ENCODE measurements at regions of chr17 and their contacts with region 1.

Region 1: DNA sequence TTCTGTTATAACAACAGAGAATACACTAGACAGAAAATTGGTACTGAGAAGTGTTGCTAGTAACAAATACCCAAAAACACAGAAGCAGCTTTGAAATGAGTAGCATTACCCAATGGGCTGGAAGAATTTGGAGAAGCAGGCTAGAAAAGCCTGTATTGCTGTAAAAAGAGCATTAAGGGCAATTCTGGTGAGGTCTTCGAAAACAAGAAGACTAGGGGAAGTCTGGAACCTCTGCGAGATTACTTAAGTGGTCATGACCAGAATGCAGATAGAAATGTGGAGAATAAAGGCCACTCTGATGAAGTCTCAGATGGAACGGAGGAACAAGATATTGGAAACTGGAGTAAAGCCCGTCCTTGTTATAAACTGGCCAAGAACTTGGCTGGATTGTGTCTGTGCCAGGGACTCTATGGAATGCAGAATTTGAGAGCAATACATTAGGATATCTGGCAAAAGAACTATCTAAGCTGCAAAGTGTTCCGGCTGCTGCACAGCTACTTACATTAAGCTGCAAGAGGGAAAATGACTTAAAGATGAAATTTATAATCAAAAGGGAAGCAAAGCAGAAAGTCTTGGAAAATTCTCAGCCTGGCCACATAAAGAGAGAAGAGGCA is 44.9 kb upstream of the PEMT start:
- DNase-seq: peak in 1 of 5 donors; percentile 5
- H3K4me3 ChIP-seq: no peak overlapping the region
- H3K27ac ChIP-seq: no peak overlapping the region
- H3K4me1 ChIP-seq: no peaks in the 10 kb centered on the region
- H3K27me3 ChIP-seq: no peaks in the 10 kb centered on the region
- CTCF ChIP-seq: no peak

Region 2: DNA sequence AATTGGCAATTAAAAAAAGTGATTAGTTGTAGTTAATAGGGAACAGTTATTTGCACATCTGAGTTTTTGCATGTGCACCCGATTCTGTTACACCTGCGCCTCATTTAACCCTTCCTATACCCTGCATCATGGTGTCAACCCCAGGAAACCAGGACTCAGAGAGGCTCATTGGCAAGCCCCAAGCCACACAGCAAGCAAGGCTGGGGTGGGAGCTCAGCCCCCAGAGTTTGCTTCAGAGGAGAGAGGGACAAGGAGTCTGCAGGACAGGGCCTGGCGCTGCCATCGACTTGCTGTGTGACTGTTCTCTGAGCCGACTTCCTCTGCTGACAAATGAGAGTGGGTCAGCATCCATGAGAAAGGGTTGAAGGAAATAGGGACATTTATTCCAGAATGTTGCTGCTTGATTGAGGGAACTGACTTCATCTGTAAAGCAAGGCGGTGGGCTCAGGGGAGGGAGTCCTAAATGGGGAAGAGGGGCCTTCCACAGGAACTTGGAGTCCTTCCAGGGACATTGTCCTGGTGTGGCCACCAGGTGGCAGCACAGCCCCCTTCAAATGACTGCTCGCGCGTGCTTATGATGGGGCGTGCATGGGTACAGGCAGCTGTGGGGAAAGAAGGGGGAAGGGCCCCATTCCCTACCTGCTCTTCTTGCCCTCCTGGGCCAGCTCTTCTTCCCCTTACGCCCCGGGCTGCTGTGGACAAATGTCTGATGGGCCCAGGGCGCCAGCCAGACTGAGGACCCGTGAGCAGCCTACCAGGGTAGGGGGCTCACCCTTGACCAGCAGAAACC is 281.6 kb before region 1 on chr17:
- intact Hi-C with region 1: loop called (anchors 5 kb)
- DNase-seq: peak in 4 of 5 donors; percentile 72 to 85 (median 82)
- H3K4me3 ChIP-seq: no peak overlapping the region
- H3K27ac ChIP-seq: no peak overlapping the region
- H3K4me1 ChIP-seq: peaks cover 0 to 2% (median 0%) of the 10 kb centered on the region in 3 donors
- H3K27me3 ChIP-seq: no peaks in the 10 kb centered on the region
- CTCF ChIP-seq: peak; percentile 90

Region 3: GRCh38 chr17:17523001-17523730 is 113.2 kb before region 1 on chr17:
- intact Hi-C with region 1: no loop called
- DNase-seq: peak in 1 of 5 donors; percentile 62
- H3K4me3 ChIP-seq: no peak overlapping the region
- H3K27ac ChIP-seq: no peak overlapping the region
- H3K4me1 ChIP-seq: no peaks in the 10 kb centered on the region
- H3K27me3 ChIP-seq: no peaks in the 10 kb centered on the region
- CTCF ChIP-seq: no peak

Measured in kidney (tissue), 22 donors.